B cell (primary cell): ENCODE measurements at regions of chr5 and their contacts with region 1.

Region 1: GRCh38 chr5:57804007-57804444 is 321.4 kb upstream of the ACTBL2 start:
- DNase-seq: no peak
- ATAC-seq: no peak
- H3K4me3 ChIP-seq: no peak overlapping the region
- H3K4me3 Mint-ChIP-seq: no peak overlapping the region
- H3K27ac ChIP-seq: no peak overlapping the region
- H3K27ac Mint-ChIP-seq: no peak overlapping the region
- H3K4me1 ChIP-seq: no peaks in the 10 kb centered on the region
- H3K4me1 Mint-ChIP-seq: no peaks in the 10 kb centered on the region
- H3K27me3 ChIP-seq: no peaks in the 10 kb centered on the region
- H3K27me3 Mint-ChIP-seq: no peaks in the 10 kb centered on the region
- CTCF ChIP-seq: no peak

Region 2: GRCh38 chr5:56229111-56229510 is 1574.9 kb before region 1 on chr5:
- CTCF ChIA-PET with region 1: no interaction called
- POLR2A ChIA-PET with region 1: interaction called, 12 read pairs
- intact Hi-C with region 1: no loop called
- DNase-seq: no peak
- ATAC-seq: no peak
- H3K4me3 ChIP-seq: no peak overlapping the region
- H3K4me3 Mint-ChIP-seq: no peak overlapping the region
- H3K27ac ChIP-seq: no peak overlapping the region
- H3K27ac Mint-ChIP-seq: no peak overlapping the region
- H3K4me1 ChIP-seq: no peaks in the 10 kb centered on the region
- H3K4me1 Mint-ChIP-seq: no peaks in the 10 kb centered on the region
- H3K27me3 ChIP-seq: no peaks in the 10 kb centered on the region
- H3K27me3 Mint-ChIP-seq: peaks cover 20% of the 10 kb centered on the region
- CTCF ChIP-seq: no peak